Posterior vena cava (tissue), 2 donors: ENCODE measurements at regions of chr1 and their contacts with region 1.

Region 1: GRCh38 chr1:216293683-216294082 is 129.6 kb downstream of the USH2A start:
- DNase-seq: no peak

Region 2: DNA sequence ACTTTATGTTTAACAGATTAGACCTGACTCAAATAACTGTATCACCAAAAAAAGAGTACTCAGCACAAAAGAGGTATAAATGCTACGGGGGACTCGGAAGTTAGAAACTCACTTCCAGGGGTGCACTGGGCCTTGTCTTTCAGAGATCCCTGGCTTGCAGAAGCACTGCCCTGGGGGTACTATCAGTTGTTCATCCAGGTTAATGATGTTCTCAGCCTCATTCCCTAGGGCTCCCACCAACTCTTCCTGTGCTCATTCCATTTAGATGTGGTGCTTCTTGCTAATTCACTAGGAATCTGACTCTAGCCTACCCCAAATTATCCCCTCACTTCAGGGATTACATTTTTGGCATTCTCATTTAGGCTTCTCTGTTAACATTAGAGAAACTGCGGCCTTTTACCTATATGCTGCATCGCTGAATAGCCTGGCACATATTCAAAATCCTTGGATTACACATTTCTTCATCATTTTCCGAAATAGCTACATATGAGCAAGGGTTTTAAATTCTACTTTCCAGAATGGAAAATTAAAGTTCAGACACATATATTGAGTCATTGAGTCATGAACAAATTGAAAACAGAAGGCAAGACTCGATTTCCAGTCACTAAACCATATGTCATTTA is 388.1 kb before region 1 on chr1:
- intact Hi-C with region 1: loop called in 1 of 2 experiments (anchors 2 kb)
- DNase-seq: no peak